Heart left ventricle (tissue), 16 donors: ENCODE measurements at regions of chr16 and their contacts with region 1.

Region 1: GRCh38 chr16:16861546-16861945 is 482.6 kb downstream of the NPIPA7 start:
- DNase-seq: peak in 4 of 5 donors; percentile 21 to 52 (median 35)
- ATAC-seq: peak in 1 of 4 donors; percentile 33
- H3K4me3 ChIP-seq: no peak overlapping the region
- H3K27ac ChIP-seq: no peak overlapping the region
- H3K4me1 ChIP-seq: peaks cover 0 to 22% (median 4%) of the 10 kb centered on the region in 12 donors
- H3K27me3 ChIP-seq: peaks cover 0 to 13% (median 0%) of the 10 kb centered on the region in 9 donors
- CTCF ChIP-seq: peak; percentile 56 to 80 (median 66)
- POLR2A ChIP-seq: no peak

Region 2: DNA sequence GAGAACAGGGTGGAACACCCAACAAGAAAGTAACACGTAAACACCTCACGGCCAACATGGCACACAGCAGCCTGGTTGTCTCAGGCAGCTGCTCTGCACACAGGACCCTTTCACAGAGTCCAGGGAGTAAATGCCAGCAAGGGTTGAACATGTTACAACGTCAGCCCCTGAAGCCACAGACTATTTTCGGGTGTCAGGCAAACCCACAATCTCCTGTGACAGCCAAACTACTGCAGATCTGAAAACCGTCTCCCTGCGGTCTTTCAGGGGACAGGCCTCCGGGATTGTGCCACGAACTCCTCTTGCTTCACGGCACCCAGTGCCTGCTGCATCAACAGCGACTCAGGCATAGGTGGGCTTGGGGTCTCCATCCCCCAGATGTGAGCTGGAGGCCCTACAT is 481.5 kb after region 1 on chr16:
- intact Hi-C with region 1: loop called in 1 of 10 experiments (anchors 10 kb)
- DNase-seq: no peak
- ATAC-seq: no peak
- H3K4me3 ChIP-seq: no peak overlapping the region
- H3K27ac ChIP-seq: peak overlapping the region in 2 of 12 donors; percentile 30 to 80
- H3K4me1 ChIP-seq: peaks cover 0 to 75% (median 26%) of the 10 kb centered on the region in 12 donors
- H3K27me3 ChIP-seq: no peaks in the 10 kb centered on the region
- CTCF ChIP-seq: no peak
- POLR2A ChIP-seq: no peak

Region 3: GRCh38 chr16:17467923-17468540 is 606.5 kb after region 1 on chr16:
- intact Hi-C with region 1: loop called (anchors 2 to 10 kb)
- DNase-seq: peak; percentile 51 to 72 (median 65)
- ATAC-seq: peak; percentile 66 to 81 (median 73)
- H3K4me3 ChIP-seq: peak overlapping the region in 4 of 12 donors; percentile 4 to 72 (median 63)
- H3K27ac ChIP-seq: peak overlapping the region in 1 of 12 donors; percentile 90
- H3K4me1 ChIP-seq: peaks cover 0 to 33% (median 15%) of the 10 kb centered on the region in 12 donors
- H3K27me3 ChIP-seq: peaks cover 0 to 35% (median 19%) of the 10 kb centered on the region in 9 donors
- CTCF ChIP-seq: peak; percentile 20 to 81 (median 60)
- POLR2A ChIP-seq: no peak

Region 4: GRCh38 chr16:17578921-17579874 is 717.7 kb after region 1 on chr16:
- intact Hi-C with region 1: loop called in 8 of 10 experiments (anchors 2 to 10 kb)
- DNase-seq: peak in 4 of 5 donors; percentile 30 to 47 (median 39)
- ATAC-seq: peak; percentile 67 to 80 (median 76)
- H3K4me3 ChIP-seq: no peak overlapping the region
- H3K27ac ChIP-seq: no peak overlapping the region
- H3K4me1 ChIP-seq: peaks cover 0 to 7% (median 0%) of the 10 kb centered on the region in 12 donors
- H3K27me3 ChIP-seq: no peaks in the 10 kb centered on the region
- CTCF ChIP-seq: peak; percentile 65 to 87 (median 78)
- POLR2A ChIP-seq: no peak